OCI-LY7 (cell line): ENCODE measurements at regions of chr17 and their contacts with region 1.

Region 1: DNA sequence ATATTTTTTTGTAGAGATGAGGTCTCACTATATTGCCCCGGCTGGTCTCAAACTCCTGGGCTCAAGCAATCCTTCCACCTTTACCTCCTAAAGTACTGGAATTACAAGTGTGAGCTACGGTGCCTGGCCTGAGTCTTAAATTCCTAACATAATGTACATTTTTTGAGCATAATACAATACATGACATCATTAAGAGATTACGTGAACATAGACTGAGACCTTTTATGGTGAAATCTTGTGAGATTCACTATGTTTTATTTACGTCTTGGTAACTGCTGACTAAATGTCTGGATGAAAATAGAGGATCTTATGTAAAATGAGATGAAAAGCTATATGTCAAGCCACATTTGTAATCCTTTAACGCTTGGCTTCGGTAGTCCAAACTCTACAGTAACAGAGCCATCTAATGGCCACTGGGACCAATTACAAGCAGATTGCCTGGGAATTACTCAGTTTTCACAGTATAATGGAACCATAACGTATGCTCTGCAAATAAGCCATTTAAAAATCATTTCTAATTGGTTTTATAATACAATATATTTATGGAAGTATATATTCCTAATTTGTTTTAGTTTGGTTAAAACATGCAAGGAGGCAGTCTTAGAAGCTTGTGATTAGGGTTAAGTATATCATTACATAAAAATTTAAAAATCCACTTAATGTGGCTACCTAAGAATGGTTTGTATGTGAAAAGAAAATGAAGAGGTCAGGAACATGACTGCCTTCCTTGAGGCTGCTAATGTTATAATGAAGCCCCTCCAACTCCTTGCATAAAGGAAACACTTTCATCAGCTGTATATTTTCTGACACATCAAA is 8.1 kb upstream of the EFCAB13 start:
- DNase-seq: peak; percentile 80
- H3K4me3 ChIP-seq: no peak overlapping the region
- H3K27ac ChIP-seq: no peak overlapping the region
- H3K4me1 ChIP-seq: no peaks in the 10 kb centered on the region
- CTCF ChIP-seq: peak; percentile 98

Region 2: GRCh38 chr17:46940621-46941404 is 374.8 kb before region 1 on chr17:
- CTCF ChIA-PET with region 1: no interaction called
- POLR2A ChIA-PET with region 1: no interaction called
- intact Hi-C with region 1: loop called (anchors 5 kb)
- DNase-seq: peak; percentile 86
- H3K4me3 ChIP-seq: no peak overlapping the region
- H3K27ac ChIP-seq: no peak overlapping the region
- H3K4me1 ChIP-seq: peaks cover 10% of the 10 kb centered on the region
- CTCF ChIP-seq: peak; percentile 87

Region 3: GRCh38 chr17:47004906-47005305 is 310.8 kb before region 1 on chr17:
- CTCF ChIA-PET with region 1: no interaction called
- POLR2A ChIA-PET with region 1: no interaction called
- intact Hi-C with region 1: loop called (anchors 5 kb)
- DNase-seq: no peak
- H3K4me3 ChIP-seq: no peak overlapping the region
- H3K27ac ChIP-seq: no peak overlapping the region
- H3K4me1 ChIP-seq: peaks cover 19% of the 10 kb centered on the region
- CTCF ChIP-seq: no peak

Region 4: GRCh38 chr17:47066841-47067682 is 248.6 kb before region 1 on chr17:
- CTCF ChIA-PET with region 1: no interaction called
- POLR2A ChIA-PET with region 1: no interaction called
- intact Hi-C with region 1: loop called (anchors 5 kb)
- DNase-seq: peak; percentile 94
- H3K4me3 ChIP-seq: peak overlapping the region; percentile 81
- H3K27ac ChIP-seq: peak overlapping the region; percentile 67
- H3K4me1 ChIP-seq: peaks cover 18% of the 10 kb centered on the region
- CTCF ChIP-seq: peak; percentile 42; the same call in 1 of the 2 replicates

Region 5: GRCh38 chr17:47229535-47230443 is 85.9 kb before region 1 on chr17:
- CTCF ChIA-PET with region 1: interaction called, 3 read pairs
- POLR2A ChIA-PET with region 1: interaction called, 4 read pairs
- intact Hi-C with region 1: loop called (anchors 1 kb)
- DNase-seq: peak; percentile 89
- H3K4me3 ChIP-seq: peak overlapping the region; percentile 58
- H3K27ac ChIP-seq: no peak overlapping the region
- H3K4me1 ChIP-seq: peaks cover 27% of the 10 kb centered on the region
- CTCF ChIP-seq: peak; percentile 97

Region 6: DNA sequence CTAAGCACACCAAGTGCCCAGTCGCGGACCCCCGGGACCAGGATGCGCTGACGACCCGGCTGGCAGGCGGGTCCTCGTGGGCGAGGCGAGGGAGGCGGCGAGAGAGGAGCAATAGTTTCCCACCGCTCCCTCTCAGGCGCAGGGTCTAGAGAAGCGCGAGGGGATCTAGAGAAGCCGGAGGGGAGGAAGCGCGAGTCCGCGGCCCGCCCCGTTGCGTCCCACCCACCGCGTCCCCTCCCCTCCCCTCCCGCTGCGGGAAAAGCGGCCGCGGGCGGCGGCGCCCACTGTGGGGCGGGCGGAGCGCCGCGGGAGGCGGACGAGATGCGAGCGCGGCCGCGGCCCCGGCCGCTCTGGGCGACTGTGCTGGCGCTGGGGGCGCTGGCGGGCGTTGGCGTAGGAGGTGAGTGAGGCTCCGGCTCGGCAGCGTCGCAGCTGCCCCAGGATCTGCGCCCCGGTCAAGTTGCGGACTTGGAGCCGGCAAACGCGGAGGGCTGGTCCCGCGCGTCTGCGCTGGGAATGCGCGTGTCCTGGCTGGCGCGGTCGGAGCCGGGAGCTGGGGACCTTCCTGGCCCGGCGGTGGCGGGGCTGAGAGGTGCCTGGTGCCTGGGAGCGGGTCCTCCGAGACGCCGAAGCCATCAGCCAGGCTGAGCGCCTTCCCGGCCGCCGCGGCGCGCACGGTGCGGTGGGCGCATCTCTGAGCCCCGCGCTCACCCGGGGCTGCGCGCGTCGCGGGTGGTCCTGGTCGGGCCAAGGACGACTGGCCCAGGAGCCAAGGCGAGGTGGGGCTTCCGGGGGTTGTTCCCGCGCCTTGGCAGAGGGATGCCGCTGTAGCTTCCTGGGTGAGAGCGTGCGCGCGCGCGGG is 61.9 kb before region 1 on chr17 and contains the start of gene ITGB3:
- CTCF ChIA-PET with region 1: no interaction called
- POLR2A ChIA-PET with region 1: no interaction called
- intact Hi-C with region 1: loop called (anchors 2 kb)
- DNase-seq: peak; percentile 81
- H3K4me3 ChIP-seq: peak within 1 kb of the TSS; percentile 69
- H3K27ac ChIP-seq: no peak within 1 kb of the TSS
- H3K4me1 ChIP-seq: peaks cover 9% of the 10 kb centered on the region
- CTCF ChIP-seq: peak; percentile 68
- total RNA-seq, gene ITGB3: not detected in 2 replicates